Activated naive CD4-positive, alpha-beta T cell treated with anti-CD3 and anti-CD28 coated beads, Interleukin-2, amount 10 ng/mL, durations not matched to agents 7 days and 5 days (primary cell): ENCODE measurements at regions of chr19 and their contacts with region 1.

Region 1: DNA sequence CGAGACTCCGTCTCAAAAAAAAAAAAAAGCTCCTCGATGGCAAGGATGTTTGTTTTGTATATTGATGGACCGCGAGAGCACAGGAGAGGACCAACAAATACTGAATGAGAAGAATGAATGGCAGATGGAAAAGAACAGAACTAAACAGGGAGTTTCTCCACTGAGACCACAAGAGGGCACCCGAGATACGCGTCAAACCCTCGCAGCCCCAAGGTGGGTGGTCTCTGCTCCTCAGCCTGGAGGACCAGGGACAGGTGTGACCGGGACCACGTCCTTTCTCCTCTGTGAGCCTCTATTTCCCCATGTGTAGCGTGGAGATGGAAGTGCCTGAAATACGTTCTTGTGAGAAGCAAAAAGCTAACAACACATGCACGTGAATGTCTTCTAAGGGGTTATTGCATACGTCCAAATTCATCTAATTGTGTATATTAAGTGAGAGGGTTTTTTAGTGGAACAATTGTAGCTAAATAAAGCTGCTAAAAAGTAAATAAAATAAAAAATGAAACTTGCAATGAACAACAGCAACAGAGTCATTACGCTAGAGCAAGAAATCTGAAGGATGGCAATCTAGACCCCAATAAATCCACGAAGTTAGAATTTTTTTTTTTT is 8.3 kb upstream of the CDC42EP5 start:
- DNase-seq: peak; percentile 54
- H3K4me3 Mint-ChIP-seq: no peak overlapping the region
- H3K27ac Mint-ChIP-seq: no peak overlapping the region
- H3K4me1 Mint-ChIP-seq: peaks cover 16% of the 10 kb centered on the region
- H3K27me3 Mint-ChIP-seq: peaks cover 59% of the 10 kb centered on the region

Region 2: GRCh38 chr19:54297760-54298305 is 183.6 kb before region 1 on chr19:
- CTCF ChIA-PET with region 1: no interaction called
- DNase-seq: no peak
- H3K4me3 Mint-ChIP-seq: no peak overlapping the region
- H3K27ac Mint-ChIP-seq: no peak overlapping the region
- H3K4me1 Mint-ChIP-seq: peaks cover 2% of the 10 kb centered on the region
- H3K27me3 Mint-ChIP-seq: peaks cover 49% of the 10 kb centered on the region

Region 3: DNA sequence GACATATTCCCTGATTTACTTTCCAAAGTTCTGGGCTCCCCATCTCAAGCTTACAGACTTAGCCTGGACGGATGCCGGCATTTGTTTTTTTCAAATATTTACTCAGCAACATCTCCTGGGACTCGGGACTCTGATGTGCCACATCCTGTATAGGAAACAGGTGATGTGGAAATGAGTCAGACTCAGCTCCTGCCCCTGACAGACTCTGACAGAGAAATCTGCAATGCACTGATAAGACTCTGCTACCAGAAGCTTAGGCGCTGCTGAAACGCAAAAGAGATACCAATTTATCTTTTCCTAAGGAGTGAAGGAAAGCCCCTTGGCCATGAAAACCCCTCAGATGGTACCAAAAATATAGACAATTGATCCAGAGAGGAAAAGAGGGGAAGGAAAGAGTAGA is 37.4 kb after region 1 on chr19:
- CTCF ChIA-PET with region 1: interaction called, 10 read pairs
- DNase-seq: peak; percentile 72
- H3K4me3 Mint-ChIP-seq: peak overlapping the region; percentile 53
- H3K27ac Mint-ChIP-seq: peak overlapping the region; percentile 92
- H3K4me1 Mint-ChIP-seq: peaks cover 64% of the 10 kb centered on the region
- H3K27me3 Mint-ChIP-seq: peaks cover 28% of the 10 kb centered on the region

Region 4: DNA sequence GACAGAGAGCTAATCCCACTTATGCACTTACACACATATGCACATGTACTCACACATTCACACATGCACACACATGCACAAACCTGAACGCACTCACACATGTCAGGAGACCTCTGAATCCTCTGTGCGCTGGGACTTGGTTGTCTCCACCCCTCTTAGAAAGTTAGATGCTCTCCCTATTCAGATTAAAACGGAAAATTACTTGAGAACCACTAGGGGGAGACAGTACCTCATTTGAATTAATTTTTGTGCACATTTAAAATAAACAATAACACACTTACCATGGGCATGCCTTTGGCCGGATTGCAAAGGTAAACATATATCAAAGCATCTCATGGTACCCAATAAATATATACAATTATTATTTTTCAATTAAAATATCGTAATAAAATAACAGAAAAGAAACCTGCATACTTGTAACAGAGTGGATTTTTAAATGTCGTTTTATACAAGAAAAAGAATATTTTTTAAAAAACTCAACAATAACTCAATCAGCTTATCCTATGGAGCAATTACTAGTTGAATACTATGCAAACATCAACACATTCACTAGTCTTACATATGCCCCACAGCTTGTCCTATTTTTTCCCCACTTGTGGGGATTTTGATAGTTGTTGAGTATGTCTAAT is 171.9 kb after region 1 on chr19:
- CTCF ChIA-PET with region 1: interaction called, 29 read pairs
- DNase-seq: no peak
- H3K4me3 Mint-ChIP-seq: no peak overlapping the region
- H3K27ac Mint-ChIP-seq: no peak overlapping the region
- H3K4me1 Mint-ChIP-seq: no peaks in the 10 kb centered on the region
- H3K27me3 Mint-ChIP-seq: peaks cover 22% of the 10 kb centered on the region